Thyroid gland (tissue), 4 donors: ENCODE measurements at regions of chr16 and their contacts with region 1.

Region 1: DNA sequence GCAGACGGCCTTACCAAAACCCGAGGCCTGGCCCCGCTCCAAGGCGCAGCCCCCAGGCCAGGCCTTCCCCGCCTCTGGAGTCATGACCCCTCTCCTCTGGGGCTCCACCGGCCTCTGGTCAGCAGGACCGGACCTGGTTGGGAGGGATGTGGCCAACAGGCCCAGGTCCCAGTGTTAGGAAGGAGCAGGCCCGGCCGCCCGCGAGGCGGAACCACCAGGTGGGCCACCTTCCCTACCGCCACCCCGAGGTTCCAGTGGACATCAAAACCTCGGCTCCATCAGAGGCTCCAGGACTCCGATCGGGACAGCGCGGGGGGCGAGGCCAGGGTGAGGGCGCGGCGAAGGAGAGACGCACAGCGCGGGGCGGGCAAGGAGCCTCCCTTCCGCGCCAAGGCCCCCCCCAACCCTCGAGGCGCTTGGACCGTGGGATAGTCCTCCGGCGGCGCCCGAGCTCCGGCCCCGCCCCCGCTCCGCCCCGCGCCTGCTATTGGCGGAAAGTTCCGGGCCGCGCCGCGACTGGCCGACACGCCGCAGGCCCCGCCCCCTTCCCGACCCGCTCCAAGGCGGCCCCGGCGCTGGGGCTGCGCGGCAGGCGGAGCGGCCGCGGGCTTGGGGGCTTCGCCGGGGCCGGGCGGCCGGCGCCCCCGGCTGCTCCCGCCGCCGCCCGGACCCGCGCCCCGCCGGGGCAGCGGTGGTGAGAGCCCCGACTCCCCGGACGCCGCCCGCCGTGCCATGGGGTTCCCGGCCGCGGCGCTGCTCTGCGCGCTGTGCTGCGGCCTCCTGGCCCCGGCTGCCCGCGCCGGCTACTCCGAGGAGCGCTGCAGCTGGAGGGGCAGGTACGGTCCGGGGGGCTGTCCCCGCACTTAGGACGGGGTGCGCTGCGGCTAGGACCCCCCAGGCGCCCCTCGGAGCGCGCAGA is at the start of gene METRN:
- DNase-seq: peak; percentile 94 to 96
- H3K4me3 ChIP-seq: peak within 1 kb of the TSS; percentile 53 to 57 (median 53)
- H3K27ac ChIP-seq: no peak within 1 kb of the TSS
- H3K4me1 ChIP-seq: peaks cover 17 to 39% of the 10 kb centered on the region in 2 donors
- H3K27me3 ChIP-seq: no peaks in the 10 kb centered on the region
- CTCF ChIP-seq: no peak
- POLR2A ChIP-seq: peak in 1 of 2 donors; percentile 46
- total RNA-seq, gene METRN: 51.0 to 109 (median 57.0) TPM

Region 2: DNA sequence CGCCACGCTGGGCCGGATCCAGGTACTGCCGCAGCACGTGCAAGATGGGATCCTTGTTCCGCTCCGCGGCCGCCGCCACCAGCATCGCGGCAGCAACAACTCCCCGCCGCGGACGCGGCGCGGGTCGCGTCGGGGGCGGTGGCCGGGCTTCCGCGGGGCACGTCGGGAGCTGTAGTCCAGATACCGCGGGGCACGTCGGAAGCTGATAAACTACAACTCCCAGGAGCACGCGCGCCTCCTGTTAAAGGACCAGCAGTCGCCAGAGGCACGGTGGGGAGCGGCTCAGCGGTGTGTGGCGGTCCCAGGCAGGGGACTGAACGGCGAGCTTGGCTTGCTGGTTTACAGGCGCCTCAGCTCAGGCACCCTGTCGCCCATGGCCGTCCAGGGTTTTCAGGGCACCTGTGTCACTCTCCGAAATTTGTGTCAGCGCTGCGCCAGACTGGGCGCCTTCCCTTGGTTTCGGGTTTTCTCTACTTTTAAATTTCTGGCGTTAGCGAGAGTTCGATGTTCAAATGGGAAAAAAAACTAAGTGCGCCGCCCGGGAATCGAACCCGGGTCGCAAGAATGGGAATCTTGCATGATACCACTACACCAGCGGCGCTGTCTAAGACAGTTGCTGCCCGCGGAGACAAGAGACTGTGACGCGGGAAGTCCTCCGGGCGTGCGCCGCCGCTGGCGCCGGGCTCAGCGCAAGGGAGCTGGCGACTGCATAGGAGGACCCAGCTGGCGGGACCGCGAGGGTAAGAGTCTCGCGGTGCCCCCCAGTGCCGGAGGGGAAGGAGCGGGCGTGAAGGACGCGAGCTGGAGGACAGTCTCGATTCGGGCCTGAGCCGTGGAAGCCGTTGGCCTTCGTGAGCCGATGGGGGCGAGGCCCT is 78.4 kb before region 1 on chr16 and contains the start of gene METTL26:
- intact Hi-C with region 1: no loop called
- DNase-seq: peak; percentile 95 to 96
- H3K4me3 ChIP-seq: peak within 1 kb of the TSS; percentile 27 to 96 (median 73)
- H3K27ac ChIP-seq: peak within 1 kb of the TSS; percentile 88 to 97 (median 96)
- H3K4me1 ChIP-seq: peaks cover 16 to 27% of the 10 kb centered on the region in 2 donors
- H3K27me3 ChIP-seq: no peaks in the 10 kb centered on the region
- CTCF ChIP-seq: no peak
- POLR2A ChIP-seq: peak in 1 of 2 donors; percentile 59
- total RNA-seq, gene METTL26: 54.2 to 180 (median 115) TPM

Region 3: DNA sequence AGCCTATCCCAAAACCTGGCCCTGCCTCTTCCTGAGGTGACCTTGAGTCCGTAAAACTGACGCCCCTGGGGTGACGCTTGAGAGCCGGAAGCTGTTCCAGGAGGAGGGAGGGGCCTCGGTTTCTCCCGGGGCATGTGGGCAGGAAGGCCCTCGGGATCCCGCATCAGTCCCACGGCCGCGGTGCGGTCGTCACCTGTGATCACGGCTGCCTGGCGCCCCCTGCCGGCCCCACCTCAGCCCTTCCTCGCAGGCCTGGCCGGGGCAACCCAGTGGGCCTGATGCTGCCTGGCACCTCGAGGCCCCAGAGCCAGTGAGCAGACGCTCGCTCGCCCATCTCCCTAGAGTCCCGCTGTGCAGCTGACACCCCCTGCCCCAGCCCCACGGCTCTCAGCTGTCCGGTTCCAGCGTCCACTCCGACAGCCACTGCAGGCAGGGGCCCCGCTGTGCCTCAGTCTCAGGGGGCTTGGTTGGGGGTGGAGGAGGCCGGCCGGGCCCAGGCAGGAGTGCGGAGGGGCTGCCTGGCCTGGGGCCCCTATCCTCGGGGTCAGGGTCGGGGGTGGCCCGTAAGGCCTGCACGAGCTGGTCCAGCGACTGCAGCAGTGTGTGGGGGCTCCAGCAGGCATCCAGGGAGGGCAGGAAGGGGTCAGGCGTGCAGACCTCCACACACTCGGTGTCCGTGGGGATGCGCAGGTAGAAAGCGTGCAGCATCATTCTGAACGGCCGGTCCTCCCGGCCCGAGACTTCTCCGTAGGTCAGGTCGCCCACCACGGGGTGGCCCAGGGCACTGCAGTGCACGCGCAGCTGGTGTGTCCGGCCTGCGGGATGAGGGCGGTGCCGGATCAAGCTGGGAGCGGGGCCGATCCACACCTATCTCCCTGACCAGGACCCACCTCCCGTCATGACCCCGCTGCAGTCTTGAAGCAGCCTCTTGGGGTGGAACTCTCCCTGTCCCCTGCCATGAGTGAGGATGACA is 71.0 kb after region 1 on chr16:
- intact Hi-C with region 1: loop called (anchors 2 kb)
- DNase-seq: peak; percentile 60 to 61
- H3K4me3 ChIP-seq: no peak overlapping the region
- H3K27ac ChIP-seq: no peak overlapping the region
- H3K4me1 ChIP-seq: peaks cover 14 to 24% of the 10 kb centered on the region in 2 donors
- H3K27me3 ChIP-seq: no peaks in the 10 kb centered on the region
- CTCF ChIP-seq: peak in 5 of 6 experiments; percentile 36 to 67 (median 64)
- POLR2A ChIP-seq: no peak

Region 4: GRCh38 chr16:1054660-1055556 is 340.1 kb after region 1 on chr16:
- intact Hi-C with region 1: loop called (anchors 10 kb)
- DNase-seq: peak; percentile 61 to 65
- H3K4me3 ChIP-seq: no peak overlapping the region
- H3K27ac ChIP-seq: no peak overlapping the region
- H3K4me1 ChIP-seq: peaks cover 0 to 3% of the 10 kb centered on the region in 2 donors
- H3K27me3 ChIP-seq: peaks cover 7% of the 10 kb centered on the region
- CTCF ChIP-seq: peak; percentile 61 to 88 (median 68)
- POLR2A ChIP-seq: no peak